Panc1 (cell line): ENCODE measurements at regions of chr15 and their contacts with region 1.

Region 1: GRCh38 chr15:42716626-42717025 is 20.3 kb downstream of the CDAN1 start:
- DNase-seq: no peak
- ATAC-seq: no peak
- H3K4me3 ChIP-seq: no peak overlapping the region
- H3K27ac ChIP-seq: no peak overlapping the region
- H3K4me1 ChIP-seq: no peaks in the 10 kb centered on the region
- H3K27me3 ChIP-seq: no peaks in the 10 kb centered on the region
- CTCF ChIP-seq: no peak

Region 2: GRCh38 chr15:42621386-42621785 is 95.2 kb before region 1 on chr15:
- CTCF ChIA-PET with region 1: no interaction called
- POLR2A ChIA-PET with region 1: interaction called, 10 read pairs
- in situ Hi-C with region 1: no loop called
- intact Hi-C with region 1: no loop called
- DNase-seq: no peak
- ATAC-seq: no peak
- H3K4me3 ChIP-seq: no peak overlapping the region
- H3K27ac ChIP-seq: no peak overlapping the region
- H3K4me1 ChIP-seq: no peaks in the 10 kb centered on the region
- H3K27me3 ChIP-seq: no peaks in the 10 kb centered on the region
- CTCF ChIP-seq: no peak